MCF 10A (cell line): ENCODE measurements at regions of chr3 and their contacts with region 1.

Region 1: GRCh38 chr3:157201648-157202278 is 41.8 kb upstream of the CCNL1 start:
- DNase-seq: peak; percentile 52
- H3K4me3 Mint-ChIP-seq: no peak overlapping the region
- H3K27ac Mint-ChIP-seq: no peak overlapping the region
- H3K4me1 Mint-ChIP-seq: no peaks in the 10 kb centered on the region
- H3K27me3 Mint-ChIP-seq: no peaks in the 10 kb centered on the region
- CTCF ChIP-seq: peak; percentile 45

Region 2: GRCh38 chr3:157174649-157175498 is 26.9 kb before region 1 on chr3:
- CTCF ChIA-PET with region 1: interaction called, 6 read pairs
- POLR2A ChIA-PET with region 1: interaction called, 33 read pairs
- intact Hi-C with region 1: loop called (anchors 1 kb)
- DNase-seq: peak; percentile 99
- H3K4me3 Mint-ChIP-seq: peak overlapping the region; percentile 83
- H3K27ac Mint-ChIP-seq: peak overlapping the region; percentile 98
- H3K4me1 Mint-ChIP-seq: peaks cover 6% of the 10 kb centered on the region
- H3K27me3 Mint-ChIP-seq: no peaks in the 10 kb centered on the region
- CTCF ChIP-seq: no peak

Region 3: GRCh38 chr3:157354722-157355121 is 153.0 kb after region 1 on chr3:
- CTCF ChIA-PET with region 1: no interaction called
- POLR2A ChIA-PET with region 1: no interaction called
- intact Hi-C with region 1: loop called (anchors 10 kb)
- DNase-seq: peak; percentile 56
- H3K4me3 Mint-ChIP-seq: no peak overlapping the region
- H3K27ac Mint-ChIP-seq: no peak overlapping the region
- H3K4me1 Mint-ChIP-seq: peaks cover 30% of the 10 kb centered on the region
- H3K27me3 Mint-ChIP-seq: no peaks in the 10 kb centered on the region
- CTCF ChIP-seq: peak; percentile 44

Region 4: GRCh38 chr3:157487339-157487738 is 285.6 kb after region 1 on chr3:
- CTCF ChIA-PET with region 1: interaction called, 282 read pairs
- POLR2A ChIA-PET with region 1: no interaction called
- intact Hi-C with region 1: no loop called
- DNase-seq: no peak
- H3K4me3 Mint-ChIP-seq: no peak overlapping the region
- H3K27ac Mint-ChIP-seq: no peak overlapping the region
- H3K4me1 Mint-ChIP-seq: no peaks in the 10 kb centered on the region
- H3K27me3 Mint-ChIP-seq: no peaks in the 10 kb centered on the region
- CTCF ChIP-seq: no peak

Region 5: GRCh38 chr3:157572559-157573270 is 371.0 kb after region 1 on chr3:
- CTCF ChIA-PET with region 1: interaction called, 3 read pairs
- POLR2A ChIA-PET with region 1: no interaction called
- intact Hi-C with region 1: loop called (anchors 1 kb)
- DNase-seq: peak; percentile 72
- H3K4me3 Mint-ChIP-seq: no peak overlapping the region
- H3K27ac Mint-ChIP-seq: no peak overlapping the region
- H3K4me1 Mint-ChIP-seq: peaks cover 11% of the 10 kb centered on the region
- H3K27me3 Mint-ChIP-seq: no peaks in the 10 kb centered on the region
- CTCF ChIP-seq: peak; percentile 63